Activated CD8-positive, alpha-beta T cell treated with anti-CD3 and anti-CD28 coated beads for 36 hours (primary cell): ENCODE measurements at regions of chr1 and their contacts with region 1.

Region 1: DNA sequence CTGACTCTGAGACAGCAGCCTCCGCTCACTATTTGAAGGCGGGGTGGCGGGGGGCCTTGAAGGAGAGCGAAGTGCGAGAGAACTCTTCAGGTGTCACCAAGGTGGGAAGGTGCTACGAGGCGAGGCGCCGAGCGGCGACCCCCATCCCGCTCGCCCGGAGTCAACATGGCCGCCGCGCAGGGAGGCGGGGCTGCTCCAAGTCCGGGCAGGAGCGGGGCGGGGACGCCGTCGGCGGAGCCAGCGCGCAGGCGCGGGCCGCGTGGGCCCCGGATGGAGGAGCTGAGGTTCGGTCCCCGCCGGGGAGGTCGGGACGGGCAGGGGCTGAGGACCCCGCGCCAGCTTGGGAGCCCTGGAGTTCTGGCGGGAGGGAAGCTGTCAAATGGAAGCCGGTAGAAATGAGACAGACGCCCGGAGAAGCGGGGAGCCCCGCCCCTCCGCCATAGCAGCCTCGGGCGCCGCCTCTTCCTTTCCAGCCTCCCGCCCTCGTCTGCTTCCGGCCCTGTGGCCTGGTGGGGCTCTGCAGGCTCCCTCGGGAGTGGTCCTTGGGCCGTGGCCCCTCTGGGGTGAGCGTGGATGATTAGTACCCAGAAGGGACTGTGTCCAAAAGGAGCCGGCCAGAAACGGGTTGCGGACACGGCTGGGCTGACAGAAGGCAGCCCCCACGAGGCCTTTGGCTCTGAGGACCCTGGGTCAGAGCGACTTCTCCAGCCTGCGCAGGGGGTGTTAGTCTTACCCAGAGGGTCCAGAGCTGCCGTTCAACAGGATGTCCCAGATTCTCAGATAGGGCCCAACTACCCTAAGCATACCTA is at the start of gene PIGV:
- DNase-seq: peak; percentile 91
- ATAC-seq: peak; percentile 50
- H3K4me3 Mint-ChIP-seq: peak within 1 kb of the TSS; percentile 97
- H3K27ac Mint-ChIP-seq: peak within 1 kb of the TSS; percentile 99
- H3K4me1 Mint-ChIP-seq: peaks cover 78% of the 10 kb centered on the region
- H3K27me3 Mint-ChIP-seq: no peaks in the 10 kb centered on the region
- CTCF ChIP-seq: no peak
- total RNA-seq, gene PIGV: 21.2 to 23.9 TPM

Region 2: DNA sequence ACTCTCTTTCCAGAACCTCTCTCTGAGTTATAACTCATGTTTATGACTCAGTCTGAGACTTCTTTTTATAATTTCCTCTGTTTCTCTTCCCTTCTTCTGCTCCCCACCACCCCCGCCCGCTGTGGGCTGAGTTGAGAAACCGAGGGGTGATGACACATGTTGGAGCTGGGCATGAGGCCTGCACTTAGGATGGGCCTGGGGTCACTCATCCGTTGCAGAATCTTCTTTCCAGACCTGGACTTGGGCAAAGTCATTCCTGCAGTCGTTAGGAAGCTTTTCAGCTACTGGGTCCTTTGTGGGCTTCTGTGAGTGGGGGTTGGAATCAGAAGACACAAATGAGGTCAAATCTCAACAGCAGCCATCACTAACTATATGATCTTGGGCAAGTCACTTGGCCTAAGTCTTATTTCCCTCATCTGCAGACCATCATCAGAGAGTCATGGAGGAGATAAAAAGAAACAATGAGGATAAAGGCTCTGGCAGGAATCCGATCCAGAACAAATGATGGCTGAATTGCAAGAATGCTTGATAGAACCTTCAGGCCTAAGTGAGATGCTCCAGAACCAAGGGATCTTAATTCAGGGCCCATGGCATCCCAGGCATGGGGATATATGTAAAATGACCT is 205.0 kb before region 1 on chr1:
- CTCF ChIA-PET with region 1: interaction called, 32 read pairs
- POLR2A ChIA-PET with region 1: interaction called, 14 read pairs
- intact Hi-C with region 1: no loop called
- DNase-seq: peak; percentile 94
- ATAC-seq: peak; percentile 55
- H3K4me3 Mint-ChIP-seq: peak overlapping the region; percentile 9
- H3K27ac Mint-ChIP-seq: peak overlapping the region; percentile 97
- H3K4me1 Mint-ChIP-seq: peaks cover 56% of the 10 kb centered on the region
- H3K27me3 Mint-ChIP-seq: no peaks in the 10 kb centered on the region
- CTCF ChIP-seq: no peak

Region 3: DNA sequence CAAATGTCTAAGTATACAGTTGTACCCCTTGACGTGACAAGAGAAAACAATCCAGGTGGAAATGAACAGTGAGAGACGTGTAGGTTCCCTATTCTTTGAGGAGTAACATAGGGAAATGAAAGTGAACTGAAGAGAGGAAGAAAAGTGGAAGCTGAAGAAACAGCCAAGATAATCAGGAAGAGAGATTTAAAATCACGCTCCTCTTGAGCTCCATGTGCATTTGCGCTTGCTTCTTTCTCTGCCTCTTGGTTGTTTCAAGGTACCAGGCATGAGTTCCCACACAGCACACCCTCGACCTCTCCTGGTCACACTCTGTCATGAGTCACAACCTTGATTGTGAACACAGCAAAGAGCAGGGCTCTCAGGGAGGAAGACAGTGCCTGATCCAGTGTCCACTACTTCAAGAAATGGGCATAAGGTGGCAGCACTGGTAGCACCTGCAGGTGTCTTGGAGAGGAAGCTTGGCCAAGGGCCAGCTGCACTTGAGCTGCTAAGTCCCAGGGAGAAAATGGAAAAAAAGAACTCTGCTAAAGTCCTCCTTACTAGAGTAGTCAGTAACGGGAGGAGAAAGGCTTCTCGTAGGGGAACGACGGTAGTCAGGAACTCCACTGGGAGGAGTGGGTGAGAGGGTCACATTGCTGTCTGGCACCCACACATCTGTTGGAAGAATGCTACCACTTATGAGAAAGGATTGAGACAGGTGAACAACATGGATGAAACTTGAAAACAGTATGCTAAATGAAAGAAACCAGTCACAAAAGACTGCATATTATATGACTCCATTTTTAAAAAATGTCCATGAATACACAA is 110.4 kb before region 1 on chr1:
- CTCF ChIA-PET with region 1: interaction called, 35 read pairs
- POLR2A ChIA-PET with region 1: no interaction called
- intact Hi-C with region 1: no loop called
- DNase-seq: peak; percentile 75
- ATAC-seq: peak; percentile 100
- H3K4me3 Mint-ChIP-seq: peak overlapping the region; percentile 20
- H3K27ac Mint-ChIP-seq: peak overlapping the region; percentile 32
- H3K4me1 Mint-ChIP-seq: peaks cover 18% of the 10 kb centered on the region
- H3K27me3 Mint-ChIP-seq: no peaks in the 10 kb centered on the region
- CTCF ChIP-seq: peak; percentile 52

Region 4: DNA sequence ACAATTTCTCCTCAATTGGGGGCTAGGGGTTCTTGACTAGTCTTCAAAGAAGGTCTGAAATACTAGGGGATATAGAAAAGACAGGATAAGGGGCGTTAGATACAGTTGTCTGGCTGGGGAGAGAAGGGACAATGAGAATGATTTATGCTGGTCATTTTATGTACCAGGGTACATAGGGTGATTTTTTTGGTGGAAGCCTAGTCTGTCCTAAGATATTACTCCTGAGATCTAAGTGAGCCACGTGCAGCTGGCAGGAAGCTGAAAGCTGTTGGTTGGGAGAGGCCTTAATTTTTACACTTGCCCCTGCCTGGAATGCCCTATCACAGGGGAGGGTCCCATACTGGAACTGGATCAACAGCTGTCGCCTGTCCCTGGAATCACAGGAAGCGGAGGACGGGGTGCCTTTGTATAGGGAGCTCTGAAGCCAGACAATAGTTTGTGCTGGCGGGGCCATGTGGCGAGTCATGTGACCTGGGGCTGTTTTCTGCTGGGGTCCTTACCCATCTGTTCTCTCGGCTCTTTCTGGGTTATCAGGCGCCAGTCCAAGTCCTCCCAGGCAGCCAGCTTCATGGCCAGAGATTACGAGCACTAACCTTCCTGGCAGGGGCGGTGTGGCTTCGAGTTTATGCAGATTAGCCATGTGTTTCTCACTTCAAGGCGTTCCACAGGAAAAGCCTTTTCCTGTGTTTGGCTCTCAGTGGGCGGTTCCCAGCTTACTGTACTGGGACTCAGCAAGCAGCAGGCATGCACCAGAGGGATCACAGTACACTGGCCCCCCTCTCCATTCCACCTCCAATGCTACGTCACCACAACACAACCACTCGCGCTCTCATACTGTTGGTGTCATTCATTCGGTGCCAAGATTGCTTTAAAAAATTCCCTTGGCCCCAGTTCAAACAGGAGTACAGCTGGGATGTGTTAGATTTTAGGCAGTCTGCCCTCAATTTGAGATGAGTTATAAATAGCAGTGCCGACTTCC is 64.6 kb before region 1 on chr1:
- CTCF ChIA-PET with region 1: interaction called, 13 read pairs
- POLR2A ChIA-PET with region 1: interaction called, 8 read pairs
- intact Hi-C with region 1: no loop called
- DNase-seq: peak; percentile 40
- ATAC-seq: peak; percentile 36
- H3K4me3 Mint-ChIP-seq: peak overlapping the region; percentile 7
- H3K27ac Mint-ChIP-seq: peak overlapping the region; percentile 84
- H3K4me1 Mint-ChIP-seq: peaks cover 93% of the 10 kb centered on the region
- H3K27me3 Mint-ChIP-seq: no peaks in the 10 kb centered on the region
- CTCF ChIP-seq: no peak

Region 5: DNA sequence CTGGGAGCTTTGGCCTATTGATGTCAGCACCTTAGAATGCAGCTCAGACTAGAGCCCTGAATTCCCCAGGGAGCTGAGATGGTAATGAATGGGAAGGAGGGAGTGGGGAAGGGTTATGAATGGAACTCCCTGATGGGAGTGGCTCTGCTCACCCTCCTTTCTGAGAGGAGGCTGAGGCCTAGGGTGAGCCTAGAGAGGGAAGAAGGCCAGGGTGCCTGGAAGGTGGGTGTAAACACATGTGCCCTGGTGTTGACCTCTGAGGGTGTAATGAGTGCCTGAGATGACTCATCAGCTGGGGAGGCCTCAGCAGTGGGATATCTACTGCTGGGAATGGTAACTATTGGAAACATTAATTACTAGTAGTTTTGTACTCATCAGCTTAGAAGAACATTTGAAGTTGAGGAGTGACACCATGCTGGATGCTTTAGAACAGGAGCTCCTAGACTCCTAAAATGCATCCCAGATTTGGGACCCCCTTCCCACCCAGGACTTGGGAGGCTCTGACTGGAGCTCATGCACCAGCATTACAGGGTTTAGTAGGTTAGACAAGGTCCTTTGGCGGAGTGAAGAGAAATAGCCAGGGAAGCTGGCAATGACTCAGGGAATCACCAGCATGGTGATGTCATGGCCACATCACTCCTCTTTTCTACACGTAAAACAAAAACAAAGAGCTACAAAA is 16.1 kb before region 1 on chr1:
- CTCF ChIA-PET with region 1: interaction called, 27 read pairs
- POLR2A ChIA-PET with region 1: interaction called, 30 read pairs
- intact Hi-C with region 1: no loop called
- DNase-seq: peak; percentile 47
- ATAC-seq: peak; percentile 71
- H3K4me3 Mint-ChIP-seq: no peak overlapping the region
- H3K27ac Mint-ChIP-seq: peak overlapping the region; percentile 86
- H3K4me1 Mint-ChIP-seq: peaks cover 33% of the 10 kb centered on the region
- H3K27me3 Mint-ChIP-seq: no peaks in the 10 kb centered on the region
- CTCF ChIP-seq: no peak

Region 6: DNA sequence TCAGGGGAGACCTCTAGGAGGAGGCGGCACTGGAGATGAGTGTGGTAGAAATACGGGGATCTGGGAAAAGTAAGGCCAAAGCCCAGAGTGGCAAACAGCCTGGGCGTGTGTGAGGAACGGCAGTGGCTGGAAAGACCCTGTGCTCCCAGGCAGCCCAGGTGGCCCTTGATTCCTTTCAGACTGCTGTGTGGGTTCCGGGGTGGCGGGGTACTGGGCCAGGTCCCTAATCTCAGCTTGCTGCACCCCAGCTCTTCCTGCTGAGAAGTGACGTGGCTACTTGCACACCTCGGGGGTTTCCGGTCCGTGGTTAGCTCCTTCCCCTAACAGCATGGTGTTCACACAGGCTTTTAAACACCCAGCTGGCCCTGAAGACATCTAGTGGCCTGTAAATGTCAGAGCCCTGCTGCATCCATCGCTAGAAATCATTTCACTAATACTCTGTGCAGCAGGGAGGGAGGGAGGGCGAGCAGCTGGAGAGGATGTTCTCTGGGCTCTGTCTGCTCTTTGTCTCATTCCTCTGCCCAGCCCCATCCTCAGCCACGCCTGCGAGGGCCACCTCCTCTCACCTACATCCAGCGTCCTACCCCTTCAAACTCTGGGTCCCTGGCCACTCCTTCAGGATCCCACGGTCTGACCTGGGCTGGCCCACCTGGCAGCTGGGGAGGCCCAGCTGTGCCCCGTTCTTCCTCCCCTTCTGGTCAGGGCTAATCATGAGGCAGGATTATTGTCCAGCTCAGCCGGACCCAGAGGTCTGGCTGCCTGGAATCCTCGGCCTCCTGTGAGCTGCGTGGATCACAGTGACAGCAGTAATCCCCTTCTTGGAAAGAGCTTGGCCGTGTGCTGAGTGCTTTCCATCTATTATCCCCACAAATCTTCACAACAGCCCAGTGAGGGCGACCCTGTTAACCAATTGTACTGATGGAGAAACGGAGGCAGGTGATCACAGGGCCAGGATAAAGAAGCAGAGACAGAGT is 45.8 kb after region 1 on chr1:
- CTCF ChIA-PET with region 1: interaction called, 36 read pairs
- POLR2A ChIA-PET with region 1: interaction called, 6 read pairs
- intact Hi-C with region 1: no loop called
- DNase-seq: peak; percentile 95
- ATAC-seq: peak; percentile 94
- H3K4me3 Mint-ChIP-seq: peak overlapping the region; percentile 62
- H3K27ac Mint-ChIP-seq: peak overlapping the region; percentile 98
- H3K4me1 Mint-ChIP-seq: peaks cover 67% of the 10 kb centered on the region
- H3K27me3 Mint-ChIP-seq: no peaks in the 10 kb centered on the region
- CTCF ChIP-seq: no peak